GM10248 (cell line): ENCODE measurements at regions of chr16 and their contacts with region 1.

Region 1: DNA sequence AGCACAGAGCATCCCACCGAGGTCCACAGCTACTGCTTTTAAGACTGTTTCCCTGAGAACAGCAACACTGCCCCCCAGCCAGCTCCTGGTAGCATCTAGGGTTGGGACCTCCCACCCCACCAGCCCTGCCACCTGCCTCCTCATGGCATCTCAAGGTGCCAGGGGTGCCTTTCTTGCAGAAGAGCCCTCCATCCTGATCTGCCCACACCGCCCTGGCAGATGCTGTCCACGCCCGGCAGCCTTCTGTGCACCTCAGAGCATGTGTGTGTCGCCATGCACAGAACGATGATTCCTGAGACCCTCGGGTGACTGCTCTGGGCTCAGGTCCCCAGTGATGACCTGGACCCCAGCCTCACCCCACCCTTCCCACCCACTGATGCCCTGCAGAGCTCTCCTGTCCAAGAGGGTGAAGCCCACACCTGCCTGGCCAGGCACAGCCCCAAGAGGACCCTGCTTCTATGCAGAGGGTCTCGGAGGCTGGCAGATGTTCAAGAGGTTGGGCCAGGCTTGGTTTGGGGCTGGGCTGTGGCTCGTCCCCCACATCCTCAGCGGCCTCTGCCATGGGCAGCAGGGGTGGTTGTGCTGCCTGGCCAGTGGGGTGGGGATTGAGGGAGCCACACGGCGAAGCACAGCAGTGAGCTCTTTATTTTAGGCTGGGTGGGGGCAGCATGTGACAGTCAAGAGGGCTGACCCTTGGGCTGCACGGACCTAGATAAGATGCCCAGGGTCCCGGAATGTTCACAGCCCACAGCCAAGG is 5.2 kb upstream of the SPATA2L start:
- DNase-seq: no peak
- CTCF ChIP-seq: no peak

Region 2: DNA sequence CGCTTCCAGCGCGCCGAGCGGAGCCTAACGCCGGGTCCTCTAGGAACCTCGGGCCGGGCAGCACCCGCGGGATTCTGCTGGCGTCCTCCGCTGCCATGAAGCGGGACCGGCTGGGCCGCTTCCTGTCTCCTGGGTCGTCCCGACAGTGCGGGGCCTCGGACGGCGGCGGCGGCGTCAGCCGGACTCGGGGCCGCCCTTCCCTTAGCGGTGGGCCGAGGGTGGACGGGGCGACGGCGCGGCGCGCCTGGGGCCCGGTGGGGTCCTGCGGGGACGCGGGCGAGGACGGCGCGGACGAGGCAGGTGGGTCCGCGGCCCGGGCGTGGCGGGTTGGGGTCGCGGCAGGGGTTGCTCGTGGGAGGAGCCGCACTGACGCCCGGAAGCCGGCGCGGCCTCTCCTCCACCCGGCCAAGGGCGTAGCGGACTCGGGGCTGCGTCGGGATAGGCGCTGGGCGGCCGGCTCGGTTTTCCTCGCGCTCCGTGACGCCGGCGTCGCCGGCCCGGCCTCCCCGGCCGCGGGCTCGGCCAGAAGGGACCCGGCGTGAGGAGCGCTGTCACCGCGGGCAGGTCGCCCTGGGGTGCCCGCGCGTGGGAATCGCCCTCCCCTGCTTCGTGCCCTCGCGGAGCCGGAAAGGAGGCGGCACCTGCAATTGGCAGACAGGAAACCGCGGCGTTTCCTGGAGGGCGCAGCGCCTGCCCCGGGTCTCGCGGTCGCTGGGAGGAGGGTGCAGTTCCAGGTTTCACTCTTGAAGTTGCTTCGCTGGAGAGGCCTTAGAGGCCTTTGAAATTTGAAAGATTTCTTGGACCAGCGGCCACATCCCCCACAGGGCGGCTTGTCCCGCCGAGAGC is 15.1 kb after region 1 on chr16:
- CTCF ChIA-PET with region 1: interaction called, 33 read pairs
- POLR2A ChIA-PET with region 1: interaction called, 3 read pairs
- DNase-seq: peak; percentile 49
- CTCF ChIP-seq: no peak